Activated T-helper 2 cell treated with anti-CD3 and anti-CD28 coated beads, Interferon-gamma antibody, Interleukin-2, Interleukin-4, amounts not matched to agents 10 μg/mL and 5 μg/mL and 100 μg/mL, durations not matched to agents 14 hours and 24 hours and 36 hours (primary cell): ENCODE measurements at regions of chr2 and their contacts with region 1.

Region 1: GRCh38 chr2:151289369-151290088 is at the start of gene NMI:
- DNase-seq: peak; percentile 69
- H3K4me3 Mint-ChIP-seq: peak within 1 kb of the TSS; percentile 91
- H3K27ac Mint-ChIP-seq: peak within 1 kb of the TSS; percentile 95
- H3K4me1 Mint-ChIP-seq: peaks cover 38% of the 10 kb centered on the region
- H3K27me3 Mint-ChIP-seq: peaks cover 4% of the 10 kb centered on the region
- total RNA-seq, gene NMI: 43.8 and 44.0 TPM in 2 replicates

Region 2: DNA sequence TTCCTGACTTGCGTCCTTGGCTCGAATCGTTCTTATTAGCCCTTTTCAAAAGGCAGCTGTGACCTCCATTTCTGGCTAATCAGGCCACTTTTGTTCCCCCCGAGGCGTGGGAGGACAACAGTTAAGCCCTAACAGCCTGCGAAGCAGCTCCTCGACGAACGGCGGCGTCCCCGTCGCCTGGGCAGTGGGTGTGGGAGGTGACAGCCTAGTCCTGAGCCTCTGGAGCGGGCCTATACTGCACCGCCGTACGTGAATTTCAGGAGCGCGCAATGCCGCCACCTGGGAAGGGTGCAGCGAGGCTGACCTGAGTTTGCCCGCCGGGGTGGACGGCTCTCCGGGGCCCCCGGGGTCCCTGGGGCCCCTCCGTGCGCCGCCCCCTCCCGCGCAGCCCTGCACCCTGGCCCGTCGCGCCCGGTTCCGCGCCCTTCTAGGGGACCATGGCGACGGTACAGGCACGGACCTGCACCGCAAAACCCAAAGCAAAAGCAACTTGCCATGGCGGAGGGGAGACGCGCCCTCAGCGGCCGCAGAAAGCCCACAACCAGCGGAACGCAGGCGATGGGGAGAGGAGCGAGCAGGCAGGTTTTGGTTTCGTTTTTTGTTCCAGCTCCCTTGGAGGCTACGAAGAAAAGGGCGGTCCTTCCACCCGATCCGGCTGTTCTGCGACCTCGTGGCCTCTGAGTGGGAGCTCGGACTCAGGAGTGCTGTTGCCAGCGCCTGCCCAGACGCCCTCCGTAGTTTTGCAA is 28.1 kb before region 1 on chr2 and contains the start of gene RBM43:
- intact Hi-C with region 1: loop called (anchors 1 kb)
- DNase-seq: peak; percentile 86
- H3K4me3 Mint-ChIP-seq: peak within 1 kb of the TSS; percentile 92
- H3K27ac Mint-ChIP-seq: peak within 1 kb of the TSS; percentile 97
- H3K4me1 Mint-ChIP-seq: peaks cover 23% of the 10 kb centered on the region
- H3K27me3 Mint-ChIP-seq: no peaks in the 10 kb centered on the region
- total RNA-seq, gene RBM43: 2.6 and 2.8 TPM in 2 replicates

Region 3: GRCh38 chr2:151409601-151410484 is 120.3 kb after region 1 on chr2 and contains the start of gene RIF1:
- intact Hi-C with region 1: loop called (anchors 2 kb)
- DNase-seq: peak; percentile 68
- H3K4me3 Mint-ChIP-seq: peak within 1 kb of the TSS; percentile 93
- H3K27ac Mint-ChIP-seq: peak within 1 kb of the TSS; percentile 92
- H3K4me1 Mint-ChIP-seq: peaks cover 17% of the 10 kb centered on the region
- H3K27me3 Mint-ChIP-seq: peaks cover 2% of the 10 kb centered on the region
- total RNA-seq, gene RIF1: 67.1 and 72.1 TPM in 2 replicates

Region 4: GRCh38 chr2:151422917-151423439 is 133.4 kb after region 1 on chr2:
- intact Hi-C with region 1: loop called (anchors 5 kb)
- DNase-seq: no peak
- H3K4me3 Mint-ChIP-seq: peak overlapping the region; percentile 28
- H3K27ac Mint-ChIP-seq: peak overlapping the region; percentile 67
- H3K4me1 Mint-ChIP-seq: peaks cover 32% of the 10 kb centered on the region
- H3K27me3 Mint-ChIP-seq: no peaks in the 10 kb centered on the region

Region 5: DNA sequence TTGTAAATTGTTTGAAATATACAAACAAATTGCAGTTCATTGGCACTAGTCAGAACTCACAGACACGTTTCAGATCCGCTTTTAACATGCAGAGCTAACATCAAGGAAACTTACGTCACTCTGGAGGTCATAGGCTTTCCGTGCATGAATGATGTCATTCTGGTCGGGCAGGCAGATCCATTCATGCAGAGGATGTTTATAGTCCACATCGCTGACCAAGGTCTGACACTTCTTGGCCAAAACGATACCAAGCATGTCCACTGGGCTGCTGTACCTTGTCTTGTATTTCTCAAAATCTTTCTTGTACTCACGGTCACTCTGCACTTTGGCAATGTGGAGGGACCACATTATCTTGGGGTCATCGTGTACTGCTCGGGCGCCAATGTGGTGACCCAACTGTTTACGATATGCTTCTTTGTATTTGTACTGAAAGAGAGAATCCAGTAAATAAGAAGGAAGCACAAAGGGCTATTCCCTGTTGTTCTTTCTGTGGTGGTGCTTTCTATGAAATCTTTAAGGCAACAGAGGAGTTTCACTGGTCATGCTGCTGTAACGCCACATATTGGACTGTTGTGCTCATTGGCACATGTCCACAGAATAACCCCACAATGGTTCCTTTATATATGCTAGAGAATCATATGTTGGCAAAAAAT is 329.9 kb after region 1 on chr2:
- intact Hi-C with region 1: loop called (anchors 10 kb)
- DNase-seq: no peak
- H3K4me3 Mint-ChIP-seq: no peak overlapping the region
- H3K27ac Mint-ChIP-seq: no peak overlapping the region
- H3K4me1 Mint-ChIP-seq: peaks cover 10% of the 10 kb centered on the region
- H3K27me3 Mint-ChIP-seq: peaks cover 2% of the 10 kb centered on the region